ENCODE measurements at regions of chr3 and their contacts with region 1.

Region 1: DNA sequence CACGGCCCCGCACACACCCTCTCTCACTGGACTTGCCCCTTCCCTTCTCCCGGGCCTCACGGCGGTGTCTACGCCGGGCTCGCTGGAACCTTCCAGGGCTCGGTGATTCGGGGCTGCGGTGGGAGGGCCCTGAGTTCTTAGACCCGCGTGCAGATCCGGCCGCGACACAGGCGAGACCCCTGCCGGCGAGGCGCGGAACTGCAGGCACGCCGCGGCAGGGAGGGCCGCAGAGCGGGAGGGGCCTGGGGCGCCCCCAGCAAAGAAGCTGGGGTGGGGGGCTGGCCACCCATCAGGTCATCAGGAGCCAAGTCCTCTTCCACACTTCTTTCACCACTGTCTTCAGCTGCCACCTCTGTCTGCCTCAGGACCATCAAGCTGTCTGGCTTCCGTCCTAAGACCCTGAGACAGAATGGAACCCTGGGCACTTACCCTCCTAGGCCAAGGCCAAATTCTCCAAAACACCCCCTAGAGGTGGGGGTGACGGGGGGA is 164.5 kb downstream of the XXYLT1 start:
- DNase-seq: peak; percentile 74
- H3K4me3 ChIP-seq: peak overlapping the region; percentile 52
- H3K27ac ChIP-seq: no peak overlapping the region
- H3K4me1 ChIP-seq: peaks cover 33% of the 10 kb centered on the region
- H3K27me3 ChIP-seq: no peaks in the 10 kb centered on the region
- CTCF ChIP-seq: peak; percentile 100

Region 2: GRCh38 chr3:194369525-194370279 is 736.8 kb before region 1 on chr3 and contains the start of gene LRRC15:
- intact Hi-C with region 1: no loop called
- DNase-seq: no peak
- H3K4me3 ChIP-seq: no peak within 1 kb of the TSS
- H3K27ac ChIP-seq: no peak within 1 kb of the TSS
- H3K4me1 ChIP-seq: peaks cover 10% of the 10 kb centered on the region
- H3K27me3 ChIP-seq: peaks cover 59% of the 10 kb centered on the region
- CTCF ChIP-seq: no peak
- total RNA-seq, gene LRRC15: 0.14 TPM

Region 3: GRCh38 chr3:195001961-195002861 is 104.3 kb before region 1 on chr3:
- intact Hi-C with region 1: loop called (anchors 5 kb)
- DNase-seq: peak; percentile 63
- H3K4me3 ChIP-seq: no peak overlapping the region
- H3K27ac ChIP-seq: peak overlapping the region; percentile 80
- H3K4me1 ChIP-seq: peaks cover 22% of the 10 kb centered on the region
- H3K27me3 ChIP-seq: no peaks in the 10 kb centered on the region
- CTCF ChIP-seq: peak; percentile 76